ENCODE measurements at regions of chr6 and their contacts with region 1.

Region 1: DNA sequence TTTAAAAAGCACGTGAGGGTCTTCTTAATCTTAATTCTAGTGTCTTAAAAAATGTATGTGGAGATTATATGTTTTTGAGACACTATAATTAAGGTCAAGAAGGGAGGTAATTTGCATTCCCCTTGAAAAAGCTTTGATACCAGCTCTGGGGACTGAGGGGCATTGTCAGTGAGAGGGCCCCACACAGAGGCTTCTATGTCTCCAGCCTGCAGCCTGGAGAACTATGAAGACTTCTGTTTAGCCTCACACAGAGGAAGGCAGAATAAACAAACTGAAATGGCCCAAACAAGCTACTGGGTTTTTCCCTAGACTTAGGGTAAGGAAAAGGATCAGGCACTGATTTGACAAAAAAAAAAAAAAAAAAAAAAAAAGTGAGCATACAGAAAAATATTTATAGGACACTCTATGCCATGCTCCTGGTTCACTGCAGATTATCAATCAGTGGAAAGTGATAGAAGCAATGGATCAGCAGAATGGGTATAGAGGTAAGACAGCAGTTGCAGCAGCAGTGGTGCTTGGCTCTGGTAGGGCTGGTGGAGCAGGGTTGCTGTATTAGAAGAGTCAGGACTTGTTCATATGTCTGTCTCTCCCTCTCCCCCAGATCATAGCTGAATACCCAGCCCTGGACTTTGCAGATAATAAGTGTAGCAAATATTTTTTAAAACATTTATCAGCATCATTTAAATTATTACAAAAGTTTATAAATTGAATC is 85.4 kb downstream of the KLHL32 start:
- DNase-seq: peak in 38 of 42 donors; percentile 16 to 88 (median 72)

Region 2: GRCh38 chr6:96721227-96721626 is 288.7 kb before region 1 on chr6:
- intact Hi-C with region 1: no loop called
- DNase-seq: no peak

Region 3: DNA sequence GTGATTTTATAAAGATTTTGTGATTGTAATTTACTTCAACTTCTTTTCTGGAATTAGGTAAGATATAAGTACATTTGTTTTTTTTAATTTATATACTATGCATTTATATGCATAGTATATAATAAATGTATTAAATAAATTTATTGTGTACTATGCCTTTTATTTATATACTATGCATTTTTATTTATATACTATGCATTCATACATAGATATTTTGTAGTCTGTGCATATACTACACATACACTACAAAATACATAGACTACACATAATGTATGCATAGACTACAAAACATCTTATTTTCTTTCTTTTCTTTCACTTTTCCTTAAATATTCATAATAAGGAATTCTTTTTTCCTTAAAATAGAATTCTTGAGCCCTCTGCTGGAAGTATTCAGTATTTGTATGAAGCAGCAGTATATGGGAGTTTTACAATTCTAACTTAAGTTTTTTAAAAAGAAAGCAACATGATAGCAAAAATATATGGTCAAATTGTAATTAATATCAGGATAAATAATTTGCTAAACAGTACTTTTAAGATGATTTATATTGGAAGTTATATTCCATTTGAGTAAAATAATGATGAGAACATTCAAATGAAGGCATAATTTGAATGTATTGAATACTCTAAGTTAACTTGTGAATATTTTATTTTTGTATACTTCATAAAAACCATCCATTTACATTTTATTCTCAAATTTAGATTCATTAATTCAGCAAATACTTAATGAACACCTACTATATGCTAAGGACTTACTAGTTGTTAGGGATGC is 43.9 kb after region 1 on chr6:
- intact Hi-C with region 1: loop called (anchors 5 kb)
- DNase-seq: no peak

Region 4: GRCh38 chr6:97102145-97102790 is 92.3 kb after region 1 on chr6:
- intact Hi-C with region 1: no loop called
- DNase-seq: peak in 24 of 42 donors; percentile 16 to 77 (median 44)